ENCODE measurements at regions of chr20 and their contacts with region 1.

Region 1: GRCh38 chr20:6767536-6768227 is at the start of gene BMP2:
- DNase-seq: peak; percentile 63 to 79
- H3K4me3 ChIP-seq: peak within 1 kb of the TSS; percentile 96
- H3K4me3 Mint-ChIP-seq: peak within 1 kb of the TSS; percentile 92
- H3K27ac Mint-ChIP-seq: peak within 1 kb of the TSS; percentile 53
- H3K4me1 ChIP-seq: peaks cover 21% of the 10 kb centered on the region
- H3K4me1 Mint-ChIP-seq: peaks cover 33% of the 10 kb centered on the region
- H3K27me3 ChIP-seq: no peaks in the 10 kb centered on the region
- H3K27me3 Mint-ChIP-seq: no peaks in the 10 kb centered on the region
- CTCF ChIP-seq: no peak
- total RNA-seq, gene BMP2: 24.3 and 27.3 TPM in 2 replicates

Region 2: DNA sequence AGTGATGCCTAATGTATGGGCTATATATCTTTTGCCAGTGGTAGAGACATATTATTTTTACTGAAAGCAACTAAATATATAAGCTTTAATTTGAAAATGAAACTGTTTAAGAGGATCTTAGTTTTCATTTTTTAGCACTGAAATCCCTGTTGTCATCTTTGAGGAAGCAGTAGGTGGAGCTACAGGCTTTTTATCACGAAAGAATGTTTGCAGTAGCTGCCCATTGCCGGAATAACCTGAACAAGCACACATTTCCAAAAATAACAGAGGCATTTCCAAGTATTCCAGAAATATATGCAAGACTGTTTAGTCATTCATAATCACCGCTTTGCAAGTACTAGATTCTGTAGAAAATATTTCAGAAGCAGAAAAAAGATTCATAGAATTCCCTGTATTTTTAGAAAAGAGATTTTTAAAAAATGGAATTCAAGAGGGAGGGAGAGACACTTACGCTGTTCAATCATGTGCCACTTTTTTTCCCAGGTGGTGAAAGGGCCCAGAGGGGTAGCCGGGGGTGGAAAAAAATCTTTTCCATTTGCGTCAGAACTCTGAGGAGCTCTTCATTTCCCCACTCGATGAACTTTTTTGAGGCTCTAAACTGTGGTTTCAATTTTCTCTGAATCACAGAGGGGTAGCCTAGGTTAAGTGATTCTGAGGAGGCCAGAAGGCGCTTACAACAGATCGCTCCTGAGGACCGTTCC is 502.3 kb before region 1 on chr20:
- CTCF ChIA-PET with region 1: no interaction called
- POLR2A ChIA-PET with region 1: no interaction called
- intact Hi-C with region 1: loop called (anchors 1 kb)
- DNase-seq: peak in 1 of 2 experiments; percentile 22
- H3K4me3 ChIP-seq: no peak overlapping the region
- H3K4me3 Mint-ChIP-seq: no peak overlapping the region
- H3K27ac Mint-ChIP-seq: no peak overlapping the region
- H3K4me1 ChIP-seq: no peaks in the 10 kb centered on the region
- H3K4me1 Mint-ChIP-seq: no peaks in the 10 kb centered on the region
- H3K27me3 ChIP-seq: no peaks in the 10 kb centered on the region; the same call in 1 of the 2 replicates
- H3K27me3 Mint-ChIP-seq: peaks cover 10% of the 10 kb centered on the region
- CTCF ChIP-seq: peak; percentile 48 to 62

Region 3: GRCh38 chr20:6819605-6820004 is 51.9 kb after region 1 on chr20:
- CTCF ChIA-PET with region 1: interaction called, 3 read pairs
- POLR2A ChIA-PET with region 1: no interaction called
- intact Hi-C with region 1: loop called (anchors 2 kb)
- DNase-seq: peak; percentile 49 to 52
- H3K4me3 ChIP-seq: no peak overlapping the region
- H3K4me3 Mint-ChIP-seq: no peak overlapping the region
- H3K27ac Mint-ChIP-seq: no peak overlapping the region
- H3K4me1 ChIP-seq: no peaks in the 10 kb centered on the region
- H3K4me1 Mint-ChIP-seq: no peaks in the 10 kb centered on the region
- H3K27me3 ChIP-seq: no peaks in the 10 kb centered on the region
- H3K27me3 Mint-ChIP-seq: no peaks in the 10 kb centered on the region
- CTCF ChIP-seq: peak; percentile 46

Region 4: GRCh38 chr20:7094438-7094997 is 326.8 kb after region 1 on chr20:
- CTCF ChIA-PET with region 1: no interaction called
- POLR2A ChIA-PET with region 1: no interaction called
- intact Hi-C with region 1: loop called (anchors 2 kb)
- DNase-seq: peak; percentile 48 to 75
- H3K4me3 ChIP-seq: no peak overlapping the region
- H3K4me3 Mint-ChIP-seq: no peak overlapping the region
- H3K27ac Mint-ChIP-seq: no peak overlapping the region
- H3K4me1 ChIP-seq: peaks cover 21% of the 10 kb centered on the region
- H3K4me1 Mint-ChIP-seq: peaks cover 6% of the 10 kb centered on the region
- H3K27me3 ChIP-seq: no peaks in the 10 kb centered on the region
- H3K27me3 Mint-ChIP-seq: peaks cover 2% of the 10 kb centered on the region
- CTCF ChIP-seq: peak; percentile 85 to 88

Region 5: GRCh38 chr20:7285918-7286556 is 518.4 kb after region 1 on chr20:
- CTCF ChIA-PET with region 1: no interaction called
- POLR2A ChIA-PET with region 1: no interaction called
- intact Hi-C with region 1: loop called (anchors 10 kb)
- DNase-seq: peak; percentile 75 to 77
- H3K4me3 ChIP-seq: no peak overlapping the region
- H3K4me3 Mint-ChIP-seq: no peak overlapping the region
- H3K27ac Mint-ChIP-seq: no peak overlapping the region
- H3K4me1 ChIP-seq: 0 out of 2 replicates have a peak, but pooled peaks cover under 1% of the 10 kb centered on the region
- H3K4me1 Mint-ChIP-seq: no peaks in the 10 kb centered on the region
- H3K27me3 ChIP-seq: no peaks in the 10 kb centered on the region
- H3K27me3 Mint-ChIP-seq: no peaks in the 10 kb centered on the region
- CTCF ChIP-seq: peak; percentile 78 to 94